ENCODE measurements at regions of chr6 and their contacts with region 1.

Region 1: GRCh38 chr6:169803271-169803811 is 51.9 kb downstream of the ERMARD start:
- DNase-seq: no peak
- H3K27ac ChIP-seq: no peak overlapping the region
- CTCF ChIP-seq: no peak

Region 2: DNA sequence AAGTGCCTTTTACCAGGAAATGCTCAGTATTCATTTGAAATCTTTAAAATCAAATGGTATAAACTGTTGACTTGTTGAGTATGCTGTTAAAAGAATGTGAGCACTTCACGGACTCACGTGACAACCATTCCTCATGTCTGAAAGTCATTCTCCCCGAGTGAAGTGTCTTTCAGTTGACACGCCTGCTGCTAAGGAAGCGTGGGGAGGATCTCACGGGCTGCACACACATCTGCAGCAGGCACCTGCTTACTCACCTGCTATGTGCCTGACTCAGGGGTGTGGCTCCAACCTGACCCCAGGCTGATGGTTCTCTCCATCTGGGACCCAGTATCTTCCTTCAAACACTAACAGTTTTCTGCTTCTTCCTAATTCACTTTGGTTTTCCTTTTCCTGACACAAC is 134.2 kb before region 1 on chr6:
- CTCF ChIA-PET with region 1: no interaction called
- POLR2A ChIA-PET with region 1: no interaction called
- DNase-seq: peak; percentile 38
- H3K27ac ChIP-seq: no peak overlapping the region
- CTCF ChIP-seq: no peak

Region 3: GRCh38 chr6:169723200-169723909 is 80.0 kb before region 1 on chr6:
- CTCF ChIA-PET with region 1: no interaction called
- POLR2A ChIA-PET with region 1: no interaction called
- DNase-seq: peak; percentile 23
- H3K27ac ChIP-seq: peak overlapping the region; percentile 83
- CTCF ChIP-seq: no peak

Region 4: DNA sequence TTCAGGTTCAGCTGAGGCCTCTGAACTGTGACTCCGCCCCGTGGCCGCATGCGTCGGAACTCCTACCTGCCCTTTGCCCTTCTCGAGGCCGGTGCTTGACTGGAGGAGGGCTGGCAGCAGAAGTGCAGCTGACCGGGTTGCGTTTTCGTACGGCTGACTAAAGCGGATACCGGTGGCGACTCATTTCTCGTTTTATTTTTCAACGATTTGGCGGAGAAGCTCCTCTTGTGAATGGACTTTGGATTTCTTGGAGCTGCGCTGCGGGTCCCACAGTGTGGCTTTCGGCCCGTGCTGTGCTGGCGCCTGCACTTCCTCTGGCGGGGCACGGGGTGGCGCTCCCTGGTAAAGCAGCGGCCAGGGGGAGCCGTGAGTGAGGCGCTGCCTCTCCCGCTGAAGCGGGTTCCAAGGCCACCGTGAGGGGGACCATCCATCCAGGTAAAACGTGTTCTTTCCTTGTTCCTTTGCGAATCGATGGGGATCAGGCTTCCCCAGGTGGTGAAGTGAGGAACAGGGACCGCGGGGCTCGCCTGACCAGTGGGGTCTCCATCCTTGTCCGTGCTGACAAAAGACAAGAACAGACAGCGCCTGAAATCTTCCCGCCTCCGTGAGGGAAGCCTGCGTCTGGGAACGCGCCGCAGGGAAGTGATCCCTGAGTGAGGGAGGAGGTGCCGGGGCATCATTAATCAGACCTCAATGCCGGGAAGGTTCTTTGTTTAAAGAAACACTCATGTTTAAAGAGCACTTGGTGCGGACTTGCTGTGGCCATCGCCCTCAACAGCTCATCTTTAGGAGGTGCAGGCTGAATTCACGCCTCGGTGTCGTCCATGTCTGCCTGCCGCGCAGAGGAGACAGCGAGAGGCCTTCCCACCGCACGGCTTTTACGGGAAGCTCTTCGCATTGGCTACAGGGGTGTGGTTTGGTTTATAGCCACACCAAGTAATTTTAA is 13.1 kb before region 1 on chr6:
- CTCF ChIA-PET with region 1: interaction called, 29 read pairs
- POLR2A ChIA-PET with region 1: no interaction called
- DNase-seq: peak; percentile 81
- H3K27ac ChIP-seq: peak overlapping the region; percentile 76
- CTCF ChIP-seq: peak; percentile 98

Region 5: GRCh38 chr6:169831450-169832246 is 28.3 kb after region 1 on chr6:
- CTCF ChIA-PET with region 1: interaction called, 15 read pairs
- POLR2A ChIA-PET with region 1: no interaction called
- DNase-seq: peak; percentile 50
- H3K27ac ChIP-seq: no peak overlapping the region
- CTCF ChIP-seq: peak; percentile 90

Measured in RWPE1 (cell line).